Activated naive CD8-positive, alpha-beta T cell treated with anti-CD3 and anti-CD28 coated beads, Interleukin-2, amount 10 ng/mL, durations not matched to agents 7 days and 5 days (primary cell): ENCODE measurements at regions of chr1 and their contacts with region 1.

Region 1: GRCh38 chr1:114467488-114467887 is 43.5 kb downstream of the TRIM33 start:
- DNase-seq: no peak
- ATAC-seq: peak; percentile 70
- H3K4me3 Mint-ChIP-seq: peak overlapping the region; percentile 67
- H3K27ac Mint-ChIP-seq: peak overlapping the region; percentile 53
- H3K4me1 Mint-ChIP-seq: peaks cover 32% of the 10 kb centered on the region
- H3K27me3 Mint-ChIP-seq: no peaks in the 10 kb centered on the region

Region 2: DNA sequence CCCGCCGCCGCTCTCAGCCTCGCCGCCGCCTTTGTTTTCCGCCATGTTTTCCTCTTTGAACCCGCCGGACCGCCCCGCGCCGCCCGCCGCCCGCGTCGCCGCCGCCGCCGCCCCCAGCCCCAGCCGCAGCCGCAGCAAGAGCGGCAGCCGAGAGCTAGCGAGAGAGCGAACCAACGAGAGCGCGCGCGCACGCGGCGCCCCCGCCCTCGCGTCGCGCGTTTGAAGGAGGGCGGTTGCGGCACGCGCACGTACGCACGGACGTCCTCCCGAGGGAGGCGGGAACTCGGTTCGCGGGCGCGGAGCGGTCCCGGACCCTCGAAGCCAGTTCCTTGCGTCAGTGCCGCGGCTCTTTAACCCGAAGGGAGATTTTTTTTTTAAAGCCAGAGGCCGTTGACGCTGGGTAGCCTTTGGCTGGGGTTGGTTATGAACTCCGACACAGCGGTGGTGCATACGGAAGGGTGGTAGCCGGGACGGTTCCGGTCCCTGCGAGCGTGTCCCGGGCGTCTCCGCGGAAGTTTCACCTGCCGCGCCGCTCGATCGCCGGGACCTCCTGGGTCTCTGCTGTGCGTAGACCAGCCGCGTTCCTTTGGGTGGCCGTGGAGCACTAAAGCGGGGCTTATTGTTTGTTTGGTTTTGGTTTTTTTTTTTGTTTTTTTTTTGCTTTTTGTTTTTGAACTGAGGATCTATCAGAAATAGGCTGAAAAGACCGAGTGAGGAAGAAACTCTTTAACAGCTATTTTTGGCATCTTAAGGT is 43.7 kb after region 1 on chr1 and contains the start of gene TRIM33:
- POLR2A ChIA-PET with region 1: interaction called, 17 read pairs
- DNase-seq: peak; percentile 95
- ATAC-seq: peak; percentile 66
- H3K4me3 Mint-ChIP-seq: peak within 1 kb of the TSS; percentile 99
- H3K27ac Mint-ChIP-seq: peak within 1 kb of the TSS; percentile 94
- H3K4me1 Mint-ChIP-seq: peaks cover 35% of the 10 kb centered on the region
- H3K27me3 Mint-ChIP-seq: no peaks in the 10 kb centered on the region
- total RNA-seq, gene TRIM33: 43.8 to 45.6 TPM

Region 3: DNA sequence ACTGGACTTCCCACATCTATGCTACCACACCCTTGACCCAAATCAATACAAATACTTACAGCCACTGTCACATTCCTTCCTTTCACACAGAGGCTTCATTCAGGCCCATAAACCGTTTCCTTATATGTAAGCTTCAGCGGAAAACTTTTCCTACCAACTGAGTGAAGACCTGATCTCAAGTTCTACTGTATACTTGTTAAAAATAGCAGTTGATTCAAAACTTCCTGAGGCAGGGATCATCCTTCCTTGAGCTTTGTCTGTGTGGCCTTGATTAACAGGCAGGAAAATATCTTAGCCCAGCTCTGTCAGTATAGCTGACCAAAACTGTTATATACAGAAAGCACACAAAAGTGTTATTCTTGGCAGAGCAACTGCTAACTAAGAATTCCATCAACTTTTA is 159.6 kb after region 1 on chr1:
- POLR2A ChIA-PET with region 1: no interaction called
- DNase-seq: no peak
- ATAC-seq: no peak
- H3K4me3 Mint-ChIP-seq: no peak overlapping the region
- H3K27ac Mint-ChIP-seq: no peak overlapping the region
- H3K4me1 Mint-ChIP-seq: no peaks in the 10 kb centered on the region
- H3K27me3 Mint-ChIP-seq: peaks cover 17% of the 10 kb centered on the region